Colonic mucosa (tissue), 4 donors: ENCODE measurements at regions of chr6 and their contacts with region 1.

Region 1: DNA sequence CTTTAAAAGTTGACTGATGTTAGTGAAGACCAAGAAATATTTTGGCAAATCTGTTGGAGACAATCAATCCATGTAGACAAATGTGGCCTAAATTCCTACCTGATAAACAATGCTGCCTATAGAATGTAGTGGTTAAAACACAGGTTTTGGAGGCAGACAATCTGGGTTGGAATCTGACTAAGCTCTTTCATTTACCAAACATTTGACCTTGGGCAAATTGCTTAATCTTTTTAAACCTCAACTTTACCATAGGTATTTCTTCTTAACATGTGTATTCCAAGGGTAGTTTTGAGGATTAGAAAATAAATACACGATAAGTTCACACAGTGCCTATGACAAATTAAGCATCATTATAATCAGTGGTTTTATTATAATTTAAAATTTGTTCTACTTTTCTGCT is 11.5 kb downstream of the RHAG start:
- DNase-seq: no peak
- H3K4me3 ChIP-seq: no peak overlapping the region
- H3K27ac ChIP-seq: no peak overlapping the region
- H3K4me1 ChIP-seq: no peaks in the 10 kb centered on the region
- H3K27me3 ChIP-seq: no peaks in the 10 kb centered on the region
- CTCF ChIP-seq: no peak

Region 2: GRCh38 chr6:48859562-48860123 is 765.5 kb before region 1 on chr6:
- intact Hi-C with region 1: no loop called
- DNase-seq: no peak
- H3K4me3 ChIP-seq: no peak overlapping the region
- H3K27ac ChIP-seq: no peak overlapping the region
- H3K4me1 ChIP-seq: no peaks in the 10 kb centered on the region
- H3K27me3 ChIP-seq: no peaks in the 10 kb centered on the region
- CTCF ChIP-seq: no peak

Region 3: DNA sequence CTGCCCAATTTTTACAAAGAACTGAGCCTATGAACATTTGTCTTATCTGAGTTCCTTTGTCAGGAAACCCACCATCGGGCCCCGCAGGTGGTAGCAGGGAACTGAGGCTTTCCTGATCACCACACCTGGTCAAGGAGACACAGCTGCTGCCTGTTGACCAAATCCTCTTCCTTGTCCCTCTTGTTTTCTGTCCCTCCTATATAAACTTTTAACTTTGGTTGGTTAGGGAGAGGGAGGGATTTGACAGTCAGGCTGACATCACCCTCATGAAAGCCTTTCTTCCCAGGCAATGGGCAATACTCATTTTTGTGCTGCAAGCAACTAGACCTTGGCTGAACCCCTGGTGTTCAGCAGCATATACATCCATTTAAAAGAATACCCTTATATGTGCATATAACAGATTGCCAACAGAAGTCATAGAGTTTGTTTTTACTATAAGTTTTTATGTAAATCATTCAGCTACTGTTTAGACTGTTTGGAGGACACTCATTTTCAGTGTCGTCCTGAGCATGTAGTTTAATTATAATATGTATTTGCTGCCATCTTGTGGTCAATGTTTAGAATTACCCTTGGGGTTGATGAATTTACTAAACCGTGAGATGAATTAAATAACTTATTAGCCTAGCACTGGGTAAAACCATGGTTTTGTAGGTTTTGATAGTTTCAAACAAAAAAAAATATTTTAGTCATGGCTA is 224.2 kb after region 1 on chr6:
- intact Hi-C with region 1: loop called (anchors 10 kb)
- DNase-seq: no peak
- H3K4me3 ChIP-seq: no peak overlapping the region
- H3K27ac ChIP-seq: no peak overlapping the region
- H3K4me1 ChIP-seq: no peaks in the 10 kb centered on the region
- H3K27me3 ChIP-seq: no peaks in the 10 kb centered on the region
- CTCF ChIP-seq: peak; percentile 69